ENCODE measurements at regions of chr6 and their contacts with region 1.

Region 1: GRCh38 chr6:138765896-138766655 is 7.5 kb upstream of the CCDC28A start:
- DNase-seq: peak; percentile 22
- ATAC-seq: no peak
- H3K4me3 ChIP-seq: no peak overlapping the region
- H3K27ac ChIP-seq: no peak overlapping the region
- H3K4me1 ChIP-seq: no peaks in the 10 kb centered on the region
- H3K27me3 ChIP-seq: no peaks in the 10 kb centered on the region
- CTCF ChIP-seq: peak; percentile 70; the same call in 1 of the 2 replicates

Region 2: DNA sequence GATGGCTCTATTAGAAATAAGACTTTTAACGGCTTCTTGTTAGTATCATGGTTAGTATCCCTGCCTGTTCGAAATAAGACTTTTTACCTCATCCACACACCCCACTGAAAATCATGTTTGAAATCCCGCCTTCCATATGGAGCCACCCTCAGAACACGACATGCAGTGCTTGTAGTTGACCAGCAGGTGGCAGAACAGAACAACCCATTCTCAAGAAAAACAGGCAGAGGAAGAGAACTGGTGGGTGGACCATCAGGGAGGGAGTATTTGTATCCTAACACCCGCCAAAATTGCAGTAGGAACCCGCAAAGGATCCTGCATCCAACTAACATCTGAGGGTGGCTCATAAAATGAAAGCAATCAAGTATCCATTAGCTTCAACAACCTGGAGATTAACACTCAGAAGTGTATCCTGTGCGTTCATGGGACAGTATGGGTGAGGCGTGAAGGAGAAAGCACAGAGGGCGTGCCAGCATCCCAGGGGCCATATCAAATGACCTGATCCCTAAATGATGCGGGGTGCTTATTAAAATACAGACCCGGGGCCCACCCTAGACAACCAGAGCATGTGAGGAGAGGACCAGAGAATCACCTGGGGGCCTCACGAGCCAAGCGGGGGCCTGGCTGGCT is 177.2 kb before region 1 on chr6:
- CTCF ChIA-PET with region 1: interaction called, 5 read pairs
- POLR2A ChIA-PET with region 1: no interaction called
- in situ Hi-C with region 1: no loop called
- intact Hi-C with region 1: loop called (anchors 1 kb)
- DNase-seq: peak; percentile 74
- ATAC-seq: peak; percentile 50
- H3K4me3 ChIP-seq: no peak overlapping the region
- H3K27ac ChIP-seq: no peak overlapping the region
- H3K4me1 ChIP-seq: peaks cover 24% of the 10 kb centered on the region
- H3K27me3 ChIP-seq: no peaks in the 10 kb centered on the region
- CTCF ChIP-seq: peak; percentile 93

Region 3: DNA sequence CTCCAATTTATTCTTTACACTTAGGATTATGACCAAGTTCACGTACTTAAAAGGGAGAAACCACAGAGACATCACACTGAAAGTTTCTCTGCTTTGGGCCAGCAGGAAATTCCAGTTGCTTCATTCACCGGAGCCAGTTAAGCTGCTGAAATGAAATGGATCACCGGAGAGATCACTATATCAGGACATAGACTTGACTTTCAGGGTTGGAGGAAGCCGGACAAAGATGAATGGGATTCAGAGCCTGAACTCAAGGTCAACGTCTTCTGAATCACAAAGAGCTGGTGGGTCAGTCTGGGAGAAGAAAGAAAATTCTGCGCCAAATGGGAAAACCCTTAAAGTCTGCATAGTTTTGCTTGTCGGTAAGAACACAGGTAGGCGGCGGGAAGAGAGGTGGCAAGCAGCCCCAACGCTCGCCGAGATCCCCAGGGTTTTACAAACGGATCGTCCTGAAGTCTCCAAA is 74.5 kb before region 1 on chr6:
- CTCF ChIA-PET with region 1: interaction called, 3 read pairs
- POLR2A ChIA-PET with region 1: interaction called, 4 read pairs
- in situ Hi-C with region 1: no loop called
- intact Hi-C with region 1: loop called (anchors 2 kb)
- DNase-seq: no peak
- ATAC-seq: peak; percentile 23
- H3K4me3 ChIP-seq: peak overlapping the region; percentile 69 to 87
- H3K27ac ChIP-seq: peak overlapping the region; percentile 89
- H3K4me1 ChIP-seq: peaks cover 11% of the 10 kb centered on the region
- H3K27me3 ChIP-seq: no peaks in the 10 kb centered on the region
- CTCF ChIP-seq: no peak